ENCODE measurements at regions of chr10 and their contacts with region 1.

Region 1: GRCh38 chr10:6920072-6921019 is 340.3 kb upstream of the PRKCQ start:
- DNase-seq: peak; percentile 67
- H3K4me3 ChIP-seq: peak overlapping the region in 1 of 2 donors; percentile 7
- H3K27ac ChIP-seq: no peak overlapping the region
- H3K4me1 ChIP-seq: no peaks in the 10 kb centered on the region
- H3K27me3 ChIP-seq: no peaks in the 10 kb centered on the region
- CTCF ChIP-seq: peak in 3 of 4 experiments; percentile 51 to 68 (median 61)
- POLR2A ChIP-seq: no peak

Region 2: DNA sequence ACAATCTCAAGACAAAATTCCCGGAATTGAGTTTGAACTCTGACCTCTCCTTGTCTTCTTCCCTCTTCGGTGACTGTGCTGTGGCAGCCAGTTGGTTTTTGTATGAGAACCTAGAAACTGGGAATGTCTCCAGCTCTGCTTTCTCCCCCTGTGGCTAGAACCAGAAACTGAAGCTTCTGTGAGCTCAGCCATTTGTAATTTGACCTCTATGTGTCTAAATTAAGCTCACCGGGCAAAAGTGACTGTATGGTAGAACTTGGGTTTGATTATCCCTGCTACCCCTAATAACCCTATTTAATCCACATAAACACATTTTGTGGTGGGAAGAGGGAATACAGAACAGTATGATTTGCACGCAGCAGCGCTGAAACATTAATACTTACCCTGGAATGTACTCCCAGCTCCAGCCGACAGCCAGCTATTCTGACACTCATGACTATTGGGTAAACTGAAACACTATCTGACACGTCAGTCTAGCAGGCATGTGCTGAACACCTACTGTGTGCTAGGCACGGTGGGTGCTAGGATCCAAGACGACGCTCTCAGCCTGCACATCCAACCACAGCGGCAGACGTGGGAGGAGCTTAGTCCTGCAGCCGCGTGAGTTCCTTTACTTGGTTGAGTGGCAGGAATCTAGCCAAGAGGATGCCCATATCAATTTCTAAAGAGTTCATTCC is 165.7 kb after region 1 on chr10:
- intact Hi-C with region 1: loop called (anchors 5 kb)
- DNase-seq: no peak
- H3K4me3 ChIP-seq: no peak overlapping the region
- H3K27ac ChIP-seq: no peak overlapping the region
- H3K4me1 ChIP-seq: no peaks in the 10 kb centered on the region
- H3K27me3 ChIP-seq: no peaks in the 10 kb centered on the region
- CTCF ChIP-seq: peak in 1 of 4 experiments; percentile 9
- POLR2A ChIP-seq: no peak